ENCODE measurements at regions of chr2 and their contacts with region 1.

Region 1: GRCh38 chr2:7044261-7045250 is 127.3 kb downstream of the RNF144A start:
- DNase-seq: peak; percentile 64
- ATAC-seq: peak; percentile 56
- H3K4me3 ChIP-seq: no peak overlapping the region
- H3K4me3 Mint-ChIP-seq: no peak overlapping the region
- H3K27ac ChIP-seq: no peak overlapping the region
- H3K27ac Mint-ChIP-seq: no peak overlapping the region
- H3K4me1 ChIP-seq: peaks cover 4 to 6% of the 10 kb centered on the region in 2 donors
- H3K4me1 Mint-ChIP-seq: peaks cover 7% of the 10 kb centered on the region
- H3K27me3 ChIP-seq: peaks cover 0 to 16% (median 7%) of the 10 kb centered on the region in 4 experiments
- H3K27me3 Mint-ChIP-seq: peaks cover 32% of the 10 kb centered on the region
- CTCF ChIP-seq: peak; percentile 98

Region 2: GRCh38 chr2:6968319-6969100 is 76.0 kb before region 1 on chr2:
- CTCF ChIA-PET with region 1: no interaction called
- POLR2A ChIA-PET with region 1: no interaction called
- intact Hi-C with region 1: no loop called
- DNase-seq: no peak
- ATAC-seq: no peak
- H3K4me3 ChIP-seq: no peak overlapping the region
- H3K4me3 Mint-ChIP-seq: no peak overlapping the region
- H3K27ac ChIP-seq: no peak overlapping the region
- H3K27ac Mint-ChIP-seq: no peak overlapping the region
- H3K4me1 ChIP-seq: no peaks in the 10 kb centered on the region
- H3K4me1 Mint-ChIP-seq: no peaks in the 10 kb centered on the region
- H3K27me3 ChIP-seq: no peaks in the 10 kb centered on the region
- H3K27me3 Mint-ChIP-seq: no peaks in the 10 kb centered on the region
- CTCF ChIP-seq: no peak

Region 3: DNA sequence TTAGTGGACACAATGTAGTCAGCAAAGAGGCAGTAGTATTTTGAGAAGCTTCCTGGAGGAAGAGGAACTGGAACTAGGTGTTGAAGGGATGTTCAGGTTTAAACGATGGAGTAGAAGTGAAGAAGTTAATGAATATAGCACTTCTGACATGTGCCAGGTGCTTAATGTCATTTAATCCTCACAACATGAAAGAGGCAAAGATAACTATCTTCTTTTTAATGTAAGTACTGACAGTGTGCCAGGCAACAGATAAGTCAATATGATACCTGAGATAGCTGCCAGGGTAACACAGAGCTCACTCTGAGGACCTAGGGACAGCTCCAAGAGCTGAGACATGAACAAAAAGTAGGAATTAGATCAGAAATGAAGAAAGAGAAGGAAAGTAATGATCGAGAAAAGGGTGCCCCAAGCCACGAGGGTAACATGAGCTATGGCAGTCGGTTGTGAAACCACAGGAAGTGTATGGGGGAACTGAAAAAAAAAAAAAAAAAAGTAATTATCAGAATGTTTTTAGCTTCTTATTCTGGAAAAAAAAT is 13.4 kb after region 1 on chr2:
- CTCF ChIA-PET with region 1: interaction called, 21 read pairs
- POLR2A ChIA-PET with region 1: no interaction called
- intact Hi-C with region 1: no loop called
- DNase-seq: peak; percentile 47
- ATAC-seq: peak; percentile 72
- H3K4me3 ChIP-seq: peak overlapping the region in 3 of 5 experiments; percentile 22 to 36 (median 28)
- H3K4me3 Mint-ChIP-seq: peak overlapping the region; percentile 78
- H3K27ac ChIP-seq: peak overlapping the region in 1 of 2 donors; percentile 62
- H3K27ac Mint-ChIP-seq: peak overlapping the region; percentile 77
- H3K4me1 ChIP-seq: peaks cover 46 to 71% of the 10 kb centered on the region in 2 donors
- H3K4me1 Mint-ChIP-seq: peaks cover 24% of the 10 kb centered on the region
- H3K27me3 ChIP-seq: peaks cover 0 to 11% (median 4%) of the 10 kb centered on the region in 4 experiments
- H3K27me3 Mint-ChIP-seq: peaks cover under 1% of the 10 kb centered on the region
- CTCF ChIP-seq: no peak